ENCODE measurements at regions of chr20 and their contacts with region 1.

Region 1: GRCh38 chr20:58236612-58237330 is 8.3 kb upstream of the ANKRD60 start:
- DNase-seq: peak; percentile 62 to 90 (median 80)
- ATAC-seq: peak; percentile 96
- H3K4me3 ChIP-seq: peak overlapping the region; percentile 65
- H3K4me3 Mint-ChIP-seq: peak overlapping the region; percentile 77 to 94 (median 92)
- H3K27ac ChIP-seq: peak overlapping the region; percentile 76
- H3K27ac Mint-ChIP-seq: peak overlapping the region; percentile 71 to 96 (median 91)
- H3K4me1 ChIP-seq: no peaks in the 10 kb centered on the region
- H3K4me1 Mint-ChIP-seq: peaks cover 2 to 25% (median 17%) of the 10 kb centered on the region in 7 donors
- H3K27me3 ChIP-seq: no peaks in the 10 kb centered on the region
- H3K27me3 Mint-ChIP-seq: no peaks in the 10 kb centered on the region

Region 2: GRCh38 chr20:58447511-58448391 is 211.0 kb after region 1 on chr20:
- CTCF ChIA-PET with region 1: interaction called, 12 read pairs
- POLR2A ChIA-PET with region 1: interaction called, 3 read pairs
- intact Hi-C with region 1: loop called in 1 of 2 experiments (anchors 1 kb)
- DNase-seq: peak in 8 of 9 donors; percentile 19 to 63 (median 51)
- ATAC-seq: peak; percentile 67
- H3K4me3 ChIP-seq: no peak overlapping the region
- H3K4me3 Mint-ChIP-seq: no peak overlapping the region
- H3K27ac ChIP-seq: no peak overlapping the region
- H3K27ac Mint-ChIP-seq: peak overlapping the region in 4 of 9 donors; percentile 36 to 69 (median 52)
- H3K4me1 ChIP-seq: no peaks in the 10 kb centered on the region
- H3K4me1 Mint-ChIP-seq: peaks cover 0 to 12% (median under 1%) of the 10 kb centered on the region in 7 donors
- H3K27me3 ChIP-seq: no peaks in the 10 kb centered on the region
- H3K27me3 Mint-ChIP-seq: no peaks in the 10 kb centered on the region

Region 3: GRCh38 chr20:58839474-58839874 is 602.7 kb after region 1 on chr20:
- CTCF ChIA-PET with region 1: interaction called, 4 read pairs
- POLR2A ChIA-PET with region 1: no interaction called
- intact Hi-C with region 1: loop called in 1 of 2 experiments (anchors 5 kb)
- DNase-seq: peak in 8 of 9 donors; percentile 18 to 51 (median 38)
- ATAC-seq: peak; percentile 72
- H3K4me3 ChIP-seq: no peak overlapping the region
- H3K4me3 Mint-ChIP-seq: peak overlapping the region in 8 of 10 donors; percentile 14 to 70 (median 54)
- H3K27ac ChIP-seq: no peak overlapping the region
- H3K27ac Mint-ChIP-seq: no peak overlapping the region
- H3K4me1 ChIP-seq: no peaks in the 10 kb centered on the region
- H3K4me1 Mint-ChIP-seq: peaks cover 0 to 10% (median 0%) of the 10 kb centered on the region in 7 donors
- H3K27me3 ChIP-seq: peaks cover 0 to 4% of the 10 kb centered on the region in 2 donors
- H3K27me3 Mint-ChIP-seq: peaks cover 33 to 84% (median 46%) of the 10 kb centered on the region in 5 donors

Region 4: DNA sequence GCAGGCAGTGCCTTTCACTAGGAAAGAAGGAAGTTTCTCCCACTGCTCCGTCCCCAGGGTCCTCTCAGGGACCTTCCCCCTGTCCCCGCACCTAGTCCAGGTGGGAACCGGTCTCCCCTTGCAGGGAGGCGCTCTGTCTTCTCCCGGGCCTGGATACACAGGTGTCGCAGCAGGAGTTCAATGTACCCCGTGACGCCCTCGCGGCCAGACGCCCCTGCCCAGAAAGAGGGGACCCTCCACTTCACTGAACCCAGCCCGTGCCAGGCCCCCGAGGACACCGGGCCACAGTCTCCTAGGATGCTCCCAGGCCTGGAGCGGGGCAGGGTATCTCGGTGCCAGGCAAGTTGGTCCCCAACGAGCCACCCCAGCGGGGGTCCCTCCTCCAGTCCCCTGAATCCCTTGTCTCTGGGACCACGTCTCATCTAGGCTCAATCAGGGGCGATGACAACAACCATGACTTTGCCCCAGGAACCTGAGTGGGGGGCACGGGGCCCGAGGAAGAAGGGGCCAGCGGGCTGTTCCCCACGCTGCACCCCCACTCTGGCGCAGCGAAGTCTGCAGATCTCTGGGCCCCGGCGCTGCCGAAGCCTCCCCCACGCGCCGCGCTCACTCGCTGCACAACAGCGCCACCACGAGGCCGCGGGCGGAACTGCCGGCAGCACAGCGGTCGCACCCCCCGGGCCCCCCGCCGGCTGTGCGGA is 1166.6 kb after region 1 on chr20:
- CTCF ChIA-PET with region 1: no interaction called
- POLR2A ChIA-PET with region 1: no interaction called
- intact Hi-C with region 1: loop called in 1 of 2 experiments (anchors 10 kb)
- DNase-seq: peak; percentile 65 to 91 (median 77)
- ATAC-seq: peak; percentile 93
- H3K4me3 ChIP-seq: peak overlapping the region; percentile 53
- H3K4me3 Mint-ChIP-seq: peak overlapping the region in 1 of 10 donors; percentile 59
- H3K27ac ChIP-seq: peak overlapping the region; percentile 41
- H3K27ac Mint-ChIP-seq: peak overlapping the region in 4 of 9 donors; percentile 49 to 94 (median 85)
- H3K4me1 ChIP-seq: peaks cover 12 to 35% of the 10 kb centered on the region in 2 donors
- H3K4me1 Mint-ChIP-seq: peaks cover 0 to 4% (median 2%) of the 10 kb centered on the region in 7 donors
- H3K27me3 ChIP-seq: peaks cover 0 to 7% of the 10 kb centered on the region in 2 donors
- H3K27me3 Mint-ChIP-seq: peaks cover 0 to 18% (median 3%) of the 10 kb centered on the region in 5 donors

Measured in naive thymus-derived CD4-positive, alpha-beta T cell (primary cell).